CD8-positive, alpha-beta T cell (primary cell): ENCODE measurements at regions of chr16 and their contacts with region 1.

Region 1: GRCh38 chr16:67935402-67936123 is 1.1 kb downstream of the PSMB10 start:
- DNase-seq: peak; percentile 89 to 98 (median 94)
- ATAC-seq: peak; percentile 90
- H3K4me3 ChIP-seq: peak overlapping the region; percentile 94 to 100
- H3K4me3 Mint-ChIP-seq: peak overlapping the region; percentile 100
- H3K27ac ChIP-seq: peak overlapping the region; percentile 72 to 73
- H3K27ac Mint-ChIP-seq: peak overlapping the region; percentile 98
- H3K4me1 ChIP-seq: peaks cover 38% of the 10 kb centered on the region
- H3K4me1 Mint-ChIP-seq: peaks cover 37% of the 10 kb centered on the region
- H3K27me3 ChIP-seq: no peaks in the 10 kb centered on the region
- H3K27me3 Mint-ChIP-seq: no peaks in the 10 kb centered on the region
- CTCF ChIP-seq: no peak

Region 2: GRCh38 chr16:67719048-67719777 is 216.3 kb before region 1 on chr16 and contains the start of gene GFOD2:
- CTCF ChIA-PET with region 1: no interaction called
- POLR2A ChIA-PET with region 1: interaction called, 6 read pairs
- intact Hi-C with region 1: loop called in 1 of 2 experiments (anchors 1 kb)
- DNase-seq: peak; percentile 95 to 100 (median 97)
- ATAC-seq: peak; percentile 96
- H3K4me3 ChIP-seq: peak within 1 kb of the TSS; percentile 68 to 90
- H3K4me3 Mint-ChIP-seq: peak within 1 kb of the TSS; percentile 98
- H3K27ac ChIP-seq: peak within 1 kb of the TSS; percentile 85 to 96
- H3K27ac Mint-ChIP-seq: peak within 1 kb of the TSS; percentile 99
- H3K4me1 ChIP-seq: peaks cover 15% of the 10 kb centered on the region
- H3K4me1 Mint-ChIP-seq: peaks cover 32% of the 10 kb centered on the region
- H3K27me3 ChIP-seq: no peaks in the 10 kb centered on the region
- H3K27me3 Mint-ChIP-seq: no peaks in the 10 kb centered on the region
- CTCF ChIP-seq: no peak
- total RNA-seq, gene GFOD2: 2.4 to 2.6 TPM

Region 3: GRCh38 chr16:67833418-67834241 is 101.9 kb before region 1 on chr16:
- CTCF ChIA-PET with region 1: no interaction called
- POLR2A ChIA-PET with region 1: interaction called, 4 read pairs
- intact Hi-C with region 1: loop called (anchors 2 to 5 kb)
- DNase-seq: peak; percentile 84 to 96 (median 93)
- ATAC-seq: peak; percentile 99
- H3K4me3 ChIP-seq: peak overlapping the region; percentile 73 to 86
- H3K4me3 Mint-ChIP-seq: peak overlapping the region; percentile 94
- H3K27ac ChIP-seq: peak overlapping the region; percentile 52 to 59
- H3K27ac Mint-ChIP-seq: peak overlapping the region; percentile 77
- H3K4me1 ChIP-seq: peaks cover 17% of the 10 kb centered on the region
- H3K4me1 Mint-ChIP-seq: peaks cover 14% of the 10 kb centered on the region
- H3K27me3 ChIP-seq: no peaks in the 10 kb centered on the region
- H3K27me3 Mint-ChIP-seq: no peaks in the 10 kb centered on the region
- CTCF ChIP-seq: no peak

Region 4: DNA sequence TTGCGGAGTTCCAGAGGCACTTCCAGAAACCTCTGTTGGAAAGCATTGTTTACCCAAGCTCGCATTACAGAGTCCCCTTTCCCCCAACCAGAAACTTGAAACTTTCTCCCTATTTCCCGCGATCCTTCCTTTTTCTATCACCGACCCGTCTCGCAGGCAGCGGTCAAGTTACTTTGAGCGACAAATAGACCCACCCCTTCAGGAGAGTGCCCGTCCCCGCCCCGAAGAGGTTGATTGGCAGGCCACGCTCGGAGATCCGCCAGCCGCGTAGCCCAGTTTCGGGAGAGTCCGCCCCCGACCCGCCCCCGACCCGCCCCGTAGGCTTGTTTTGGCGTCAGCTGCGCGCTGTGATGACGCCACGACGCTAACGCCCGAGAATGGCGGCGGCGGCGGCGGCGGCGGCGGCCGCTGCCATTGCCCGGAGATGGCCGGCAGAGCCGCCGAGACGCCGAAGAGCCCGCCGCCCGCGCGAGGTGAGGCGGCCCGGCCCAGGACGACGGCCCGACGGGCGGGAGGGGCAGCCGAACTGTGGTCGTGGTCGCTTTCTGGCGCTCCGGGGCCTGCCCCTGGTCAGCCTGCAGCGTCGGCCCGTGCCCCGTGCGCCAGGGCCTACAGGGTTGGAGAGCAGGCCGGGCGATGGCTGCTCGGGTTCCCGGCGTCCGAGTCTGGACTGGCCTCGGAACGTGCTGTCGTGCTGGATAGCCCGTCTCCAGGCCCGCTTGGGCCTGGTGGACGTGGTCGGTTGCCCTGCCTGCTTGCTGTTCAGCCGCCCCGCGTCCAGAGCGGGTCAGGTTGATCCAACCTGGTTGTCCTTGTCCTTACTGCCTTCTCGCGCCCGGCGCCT is 42.4 kb before region 1 on chr16 and contains the start of gene PSKH1:
- CTCF ChIA-PET with region 1: interaction called, 5 read pairs
- POLR2A ChIA-PET with region 1: interaction called, 9 read pairs
- intact Hi-C with region 1: loop called (anchors 1 kb)
- DNase-seq: peak; percentile 89 to 96 (median 93)
- ATAC-seq: peak; percentile 99
- H3K4me3 ChIP-seq: peak within 1 kb of the TSS; percentile 81 to 93
- H3K4me3 Mint-ChIP-seq: peak within 1 kb of the TSS; percentile 95
- H3K27ac ChIP-seq: peak within 1 kb of the TSS; percentile 90 to 93
- H3K27ac Mint-ChIP-seq: peak within 1 kb of the TSS; percentile 96
- H3K4me1 ChIP-seq: peaks cover 24% of the 10 kb centered on the region
- H3K4me1 Mint-ChIP-seq: peaks cover 40% of the 10 kb centered on the region
- H3K27me3 ChIP-seq: no peaks in the 10 kb centered on the region
- H3K27me3 Mint-ChIP-seq: no peaks in the 10 kb centered on the region
- CTCF ChIP-seq: no peak
- total RNA-seq, gene PSKH1: 13.3 to 13.4 TPM

Region 5: GRCh38 chr16:68005786-68006286 is 70.3 kb after region 1 on chr16:
- CTCF ChIA-PET with region 1: no interaction called
- POLR2A ChIA-PET with region 1: interaction called, 19 read pairs
- intact Hi-C with region 1: no loop called
- DNase-seq: peak; percentile 39 to 85 (median 67)
- ATAC-seq: peak; percentile 96
- H3K4me3 ChIP-seq: no peak overlapping the region
- H3K4me3 Mint-ChIP-seq: peak overlapping the region; percentile 51
- H3K27ac ChIP-seq: peak overlapping the region; percentile 75 to 85
- H3K27ac Mint-ChIP-seq: peak overlapping the region; percentile 99
- H3K4me1 ChIP-seq: peaks cover 33% of the 10 kb centered on the region
- H3K4me1 Mint-ChIP-seq: peaks cover 39% of the 10 kb centered on the region
- H3K27me3 ChIP-seq: no peaks in the 10 kb centered on the region
- H3K27me3 Mint-ChIP-seq: no peaks in the 10 kb centered on the region
- CTCF ChIP-seq: no peak

Region 6: GRCh38 chr16:68085259-68086071 is 149.9 kb after region 1 on chr16 and contains the start of gene NFATC3:
- CTCF ChIA-PET with region 1: interaction called, 4 read pairs
- POLR2A ChIA-PET with region 1: interaction called, 16 read pairs
- intact Hi-C with region 1: loop called (anchors 1 to 2 kb)
- DNase-seq: peak; percentile 98 to 100 (median 99)
- ATAC-seq: peak; percentile 81
- H3K4me3 ChIP-seq: peak within 1 kb of the TSS; percentile 87 to 97
- H3K4me3 Mint-ChIP-seq: peak within 1 kb of the TSS; percentile 85
- H3K27ac ChIP-seq: peak within 1 kb of the TSS; percentile 72 to 91
- H3K27ac Mint-ChIP-seq: peak within 1 kb of the TSS; percentile 98
- H3K4me1 ChIP-seq: peaks cover 64% of the 10 kb centered on the region
- H3K4me1 Mint-ChIP-seq: peaks cover 64% of the 10 kb centered on the region
- H3K27me3 ChIP-seq: no peaks in the 10 kb centered on the region
- H3K27me3 Mint-ChIP-seq: no peaks in the 10 kb centered on the region
- CTCF ChIP-seq: no peak
- total RNA-seq, gene NFATC3: 79.4 to 85.2 TPM

Region 7: GRCh38 chr16:68116256-68116867 is 180.8 kb after region 1 on chr16:
- CTCF ChIA-PET with region 1: no interaction called
- POLR2A ChIA-PET with region 1: no interaction called
- intact Hi-C with region 1: no loop called
- DNase-seq: peak in 2 of 9 experiments; percentile 59 to 72
- ATAC-seq: peak; percentile 75
- H3K4me3 ChIP-seq: no peak overlapping the region
- H3K4me3 Mint-ChIP-seq: peak overlapping the region; percentile 51
- H3K27ac ChIP-seq: no peak overlapping the region
- H3K27ac Mint-ChIP-seq: peak overlapping the region; percentile 67
- H3K4me1 ChIP-seq: peaks cover 88% of the 10 kb centered on the region
- H3K4me1 Mint-ChIP-seq: peaks cover 84% of the 10 kb centered on the region
- H3K27me3 ChIP-seq: no peaks in the 10 kb centered on the region
- H3K27me3 Mint-ChIP-seq: no peaks in the 10 kb centered on the region
- CTCF ChIP-seq: peak; percentile 77